Dorsolateral prefrontal cortex (tissue), 120 donors: ENCODE measurements at regions of chr5 and their contacts with region 1.

Region 1: GRCh38 chr5:9239071-9239470 is 306.8 kb downstream of the SEMA5A start:
- DNase-seq: no peak
- H3K4me3 ChIP-seq: no peak overlapping the region
- H3K27ac ChIP-seq: no peak overlapping the region
- H3K27me3 ChIP-seq: no peaks in the 10 kb centered on the region
- CTCF ChIP-seq: no peak

Region 2: GRCh38 chr5:8897316-8897715 is 341.8 kb before region 1 on chr5:
- intact Hi-C with region 1: no loop called
- DNase-seq: no peak
- H3K4me3 ChIP-seq: no peak overlapping the region
- H3K27ac ChIP-seq: no peak overlapping the region
- H3K27me3 ChIP-seq: no peaks in the 10 kb centered on the region
- CTCF ChIP-seq: no peak

Region 3: GRCh38 chr5:9339206-9339818 is 100.2 kb after region 1 on chr5:
- intact Hi-C with region 1: loop called in 1 of 2 experiments (anchors 5 kb)
- DNase-seq: no peak
- H3K4me3 ChIP-seq: no peak overlapping the region
- H3K27ac ChIP-seq: peak overlapping the region in 9 of 59 donors; percentile 9 to 82 (median 70)
- H3K27me3 ChIP-seq: no peaks in the 10 kb centered on the region
- CTCF ChIP-seq: peak in 32 of 56 donors; percentile 7 to 52 (median 30)